Mucosa of descending colon (tissue), 3 donors: ENCODE measurements at regions of chr2 and their contacts with region 1.

Region 1: DNA sequence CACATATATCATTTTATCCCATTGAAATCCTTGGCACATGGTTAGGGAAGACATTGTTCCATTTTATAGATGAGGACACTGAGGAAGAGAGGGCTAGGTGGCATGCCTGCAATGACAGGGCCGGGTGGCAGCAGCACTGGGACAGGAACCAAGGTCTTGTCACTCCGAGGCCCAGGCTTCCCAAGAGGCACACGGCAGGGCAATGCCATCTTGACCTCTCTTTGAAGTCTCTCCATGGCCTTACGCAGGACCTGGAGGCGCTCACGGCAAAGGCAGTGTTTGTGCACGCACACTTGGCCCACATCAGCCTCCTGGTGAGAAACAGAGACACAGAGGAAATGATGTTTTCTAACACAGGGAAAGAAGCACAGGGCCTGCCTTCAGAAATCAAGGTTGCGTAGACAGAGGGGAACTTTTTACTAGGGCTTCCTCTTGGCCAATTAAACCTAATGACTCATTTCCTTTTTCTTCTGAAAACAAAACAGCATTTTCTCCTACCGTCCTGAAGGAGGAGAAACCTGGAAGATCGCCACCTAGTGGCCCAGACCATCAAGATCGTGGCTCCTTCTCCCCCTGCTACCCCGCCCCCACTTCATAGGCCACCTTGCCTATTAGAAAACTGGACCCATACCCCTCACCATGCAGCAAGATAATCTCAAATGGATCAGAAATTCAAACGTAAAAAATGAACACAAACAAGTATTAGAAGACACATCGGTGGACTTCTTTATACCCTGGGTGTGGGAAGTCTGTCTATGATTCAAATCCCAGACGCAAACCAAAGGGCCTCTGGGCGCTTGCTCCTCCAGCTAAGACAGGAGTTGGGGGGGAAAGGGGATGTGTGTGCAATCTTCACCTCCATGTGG is 74.6 kb upstream of the SP3 start:
- DNase-seq: peak; percentile 81 to 96 (median 84)
- ATAC-seq: peak; percentile 96
- H3K4me3 ChIP-seq: no peak overlapping the region
- H3K4me1 ChIP-seq: no peaks in the 10 kb centered on the region
- CTCF ChIP-seq: peak; percentile 45

Region 2: GRCh38 chr2:173571021-173571882 is 468.5 kb before region 1 on chr2:
- intact Hi-C with region 1: loop called in 1 of 2 experiments (anchors 10 kb)
- DNase-seq: peak in 1 of 3 donors; percentile 34
- ATAC-seq: peak; percentile 45
- H3K4me3 ChIP-seq: no peak overlapping the region
- H3K4me1 ChIP-seq: peaks cover 3% of the 10 kb centered on the region
- CTCF ChIP-seq: peak; percentile 8

Region 3: GRCh38 chr2:173884025-173884802 is 155.6 kb before region 1 on chr2:
- intact Hi-C with region 1: loop called in 1 of 2 experiments (anchors 10 kb)
- DNase-seq: peak in 2 of 3 donors; percentile 73 to 75
- ATAC-seq: peak; percentile 60
- H3K4me3 ChIP-seq: no peak overlapping the region
- H3K4me1 ChIP-seq: no peaks in the 10 kb centered on the region
- CTCF ChIP-seq: peak; percentile 30